Activated CD4-positive, alpha-beta memory T cell treated with anti-CD3 and anti-CD28 coated beads, Interleukin-2, amount 10 ng/mL, durations not matched to agents 7 days and 5 days (primary cell): ENCODE measurements at regions of chr11 and their contacts with region 1.

Region 1: DNA sequence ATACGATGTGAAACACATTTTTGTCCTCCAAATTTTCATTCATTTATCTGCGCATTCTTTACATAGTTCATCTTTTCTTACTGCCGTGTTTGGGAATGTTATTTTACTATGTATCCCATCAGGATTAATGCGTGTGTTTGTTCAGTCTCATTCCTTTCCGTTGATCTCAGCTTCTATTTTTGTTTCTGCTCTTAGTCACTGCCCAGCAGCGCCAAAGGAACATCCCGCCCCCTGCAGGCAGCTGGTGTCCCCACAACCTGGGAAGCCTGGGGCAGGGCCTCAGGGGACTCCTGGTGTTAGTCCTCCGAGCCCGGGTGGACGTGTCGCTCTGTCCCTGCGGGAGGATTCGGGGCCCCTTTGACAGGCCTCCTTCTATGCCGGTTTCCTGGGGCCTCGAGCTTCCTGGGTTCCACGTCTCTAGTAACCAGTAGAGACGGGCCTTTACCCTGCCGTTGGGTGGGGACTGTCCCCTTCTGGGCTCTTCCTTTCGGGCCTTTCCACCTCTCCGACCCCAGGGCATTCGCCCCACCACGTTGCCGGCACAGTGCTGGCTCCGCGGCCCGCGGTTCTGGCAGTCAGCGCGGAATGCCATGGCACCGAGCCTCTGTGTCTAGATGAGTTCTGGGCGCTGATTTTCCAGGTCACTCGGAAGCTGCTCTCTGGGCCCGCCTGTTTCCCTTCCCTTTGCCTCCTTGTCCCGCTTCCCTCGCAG is 39.8 kb downstream of the WEE1 start:
- DNase-seq: peak; percentile 88
- H3K4me3 Mint-ChIP-seq: peak overlapping the region; percentile 85
- H3K27ac Mint-ChIP-seq: peak overlapping the region; percentile 97
- H3K4me1 Mint-ChIP-seq: peaks cover 27% of the 10 kb centered on the region
- H3K27me3 Mint-ChIP-seq: peaks cover 3% of the 10 kb centered on the region

Region 2: GRCh38 chr11:9534791-9535781 is 78.2 kb before region 1 on chr11:
- CTCF ChIA-PET with region 1: interaction called, 103 read pairs
- POLR2A ChIA-PET with region 1: interaction called, 14 read pairs
- DNase-seq: peak; percentile 80
- H3K4me3 Mint-ChIP-seq: no peak overlapping the region
- H3K27ac Mint-ChIP-seq: no peak overlapping the region
- H3K4me1 Mint-ChIP-seq: no peaks in the 10 kb centered on the region
- H3K27me3 Mint-ChIP-seq: no peaks in the 10 kb centered on the region

Region 3: GRCh38 chr11:9573052-9573774 is 40.1 kb before region 1 on chr11 and contains the start of gene WEE1:
- CTCF ChIA-PET with region 1: interaction called, 43 read pairs
- POLR2A ChIA-PET with region 1: interaction called, 43 read pairs
- DNase-seq: peak; percentile 98
- H3K4me3 Mint-ChIP-seq: peak within 1 kb of the TSS; percentile 98
- H3K27ac Mint-ChIP-seq: peak within 1 kb of the TSS; percentile 83
- H3K4me1 Mint-ChIP-seq: peaks cover 37% of the 10 kb centered on the region
- H3K27me3 Mint-ChIP-seq: peaks cover 2% of the 10 kb centered on the region
- total RNA-seq, gene WEE1: 62.8 to 64.1 TPM

Region 4: GRCh38 chr11:9601037-9601875 is 12.0 kb before region 1 on chr11:
- CTCF ChIA-PET with region 1: interaction called, 79 read pairs
- POLR2A ChIA-PET with region 1: interaction called, 47 read pairs
- DNase-seq: peak; percentile 83
- H3K4me3 Mint-ChIP-seq: peak overlapping the region; percentile 49
- H3K27ac Mint-ChIP-seq: peak overlapping the region; percentile 59
- H3K4me1 Mint-ChIP-seq: peaks cover 25% of the 10 kb centered on the region
- H3K27me3 Mint-ChIP-seq: peaks cover 19% of the 10 kb centered on the region

Region 5: DNA sequence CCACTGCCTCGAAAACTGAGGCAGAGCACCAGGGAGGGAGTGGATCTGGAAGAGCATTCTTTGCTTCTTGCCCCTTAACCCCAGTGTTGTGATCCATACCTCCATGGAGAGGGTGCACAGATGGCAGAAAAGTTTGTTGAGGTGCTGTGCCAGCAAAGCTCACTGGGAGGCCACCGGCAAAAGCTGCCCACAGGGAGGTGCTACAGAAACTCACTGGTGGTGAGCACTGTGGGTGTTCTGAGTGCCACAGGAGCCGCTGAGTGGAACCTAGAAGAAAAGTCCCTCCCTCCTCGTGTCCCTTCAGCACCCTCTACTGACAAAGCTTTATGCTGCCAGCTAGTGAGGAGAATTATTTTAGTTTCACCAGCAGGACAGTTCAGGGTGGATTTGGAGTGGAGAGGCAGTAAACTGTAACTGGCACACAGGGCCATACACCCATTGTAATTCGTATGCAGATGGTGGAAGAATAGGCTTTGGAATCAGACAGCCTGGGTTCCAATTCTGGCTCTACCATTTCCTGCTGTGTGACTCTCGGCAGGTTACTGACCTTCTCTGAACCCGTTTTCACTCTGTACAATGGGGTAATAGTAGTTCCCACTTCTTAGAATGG is 135.2 kb after region 1 on chr11:
- CTCF ChIA-PET with region 1: interaction called, 73 read pairs
- POLR2A ChIA-PET with region 1: interaction called, 14 read pairs
- DNase-seq: peak; percentile 77
- H3K4me3 Mint-ChIP-seq: no peak overlapping the region
- H3K27ac Mint-ChIP-seq: no peak overlapping the region
- H3K4me1 Mint-ChIP-seq: peaks cover 22% of the 10 kb centered on the region
- H3K27me3 Mint-ChIP-seq: no peaks in the 10 kb centered on the region